Activated naive CD4-positive, alpha-beta T cell treated with anti-CD3 and anti-CD28 coated beads for 36 hours (primary cell): ENCODE measurements at regions of chr1 and their contacts with region 1.

Region 1: DNA sequence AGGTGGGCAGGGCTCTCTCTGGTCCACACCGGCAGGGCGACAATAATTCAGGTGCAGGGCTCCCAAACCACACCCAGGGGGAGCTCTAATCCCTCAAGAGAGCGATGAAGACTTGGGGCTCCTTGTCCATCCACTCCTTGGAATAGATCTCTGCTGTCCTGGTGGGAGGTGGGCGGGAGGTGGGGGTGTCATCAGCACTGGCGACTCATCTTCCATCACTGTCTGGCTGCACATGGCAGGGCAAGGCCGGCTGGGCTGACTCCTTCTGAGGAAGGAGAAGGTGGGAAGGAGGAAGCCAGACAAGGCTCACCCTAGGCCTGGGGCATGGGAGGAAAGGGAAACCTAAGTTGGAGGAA is 29.3 kb downstream of the TNNT2 start:
- DNase-seq: peak; percentile 52
- H3K4me3 Mint-ChIP-seq: no peak overlapping the region
- H3K27ac Mint-ChIP-seq: no peak overlapping the region
- H3K4me1 Mint-ChIP-seq: no peaks in the 10 kb centered on the region
- H3K27me3 Mint-ChIP-seq: peaks cover 25% of the 10 kb centered on the region

Region 2: DNA sequence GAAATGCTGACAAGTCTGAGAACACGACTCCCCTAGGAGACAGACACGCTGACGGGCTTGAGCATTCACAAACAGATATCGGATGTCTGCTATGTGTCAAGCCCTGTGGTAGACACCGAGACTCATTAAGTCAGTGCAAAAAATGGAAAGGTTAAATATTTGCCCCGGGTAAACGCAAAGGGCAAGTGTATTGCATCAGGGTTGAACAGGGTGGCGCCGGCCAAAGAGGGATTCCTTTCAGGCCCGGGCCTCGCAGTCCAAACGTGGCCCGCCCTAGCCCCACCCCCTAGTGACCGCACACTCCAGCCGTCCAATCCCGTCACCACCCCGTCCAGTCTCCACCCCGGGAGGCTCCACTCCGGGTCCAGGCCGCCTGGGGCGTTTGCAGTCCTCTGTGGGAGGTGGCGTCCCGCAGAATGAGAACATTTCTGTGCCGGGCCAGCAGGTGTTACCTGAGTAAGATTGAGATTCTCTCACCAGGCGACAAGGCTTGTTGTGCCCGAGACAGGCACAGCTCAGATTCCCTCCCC is 177.6 kb before region 1 on chr1:
- CTCF ChIA-PET with region 1: no interaction called
- intact Hi-C with region 1: no loop called
- DNase-seq: peak; percentile 93
- H3K4me3 Mint-ChIP-seq: peak overlapping the region; percentile 76
- H3K27ac Mint-ChIP-seq: peak overlapping the region; percentile 85
- H3K4me1 Mint-ChIP-seq: peaks cover 21% of the 10 kb centered on the region
- H3K27me3 Mint-ChIP-seq: peaks cover 2% of the 10 kb centered on the region

Region 3: GRCh38 chr1:201254625-201255506 is 93.3 kb before region 1 on chr1:
- CTCF ChIA-PET with region 1: interaction called, 4 read pairs
- intact Hi-C with region 1: loop called (anchors 5 kb)
- DNase-seq: peak; percentile 75
- H3K4me3 Mint-ChIP-seq: no peak overlapping the region
- H3K27ac Mint-ChIP-seq: no peak overlapping the region
- H3K4me1 Mint-ChIP-seq: no peaks in the 10 kb centered on the region
- H3K27me3 Mint-ChIP-seq: no peaks in the 10 kb centered on the region

Region 4: DNA sequence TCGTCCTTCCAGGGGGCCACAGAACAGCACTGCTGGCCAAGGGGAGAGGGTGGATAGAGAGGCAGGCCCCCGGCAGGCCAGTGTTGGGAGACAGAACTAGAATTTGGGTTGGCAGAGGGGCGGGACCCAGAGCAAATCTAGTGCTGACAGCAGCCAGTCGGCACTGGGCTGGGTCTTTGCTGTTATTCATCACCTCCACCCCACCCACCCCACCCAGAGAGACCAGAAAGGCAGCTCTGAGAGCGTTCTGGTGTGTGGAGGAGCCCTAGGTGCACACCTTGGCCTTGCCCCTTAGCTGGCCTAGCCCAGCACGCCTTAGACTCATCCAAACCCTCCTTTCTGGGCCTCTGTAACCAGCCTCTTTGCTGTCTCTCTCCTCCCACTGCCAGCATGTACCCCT is 71.3 kb before region 1 on chr1:
- CTCF ChIA-PET with region 1: no interaction called
- intact Hi-C with region 1: no loop called
- DNase-seq: no peak
- H3K4me3 Mint-ChIP-seq: no peak overlapping the region
- H3K27ac Mint-ChIP-seq: no peak overlapping the region
- H3K4me1 Mint-ChIP-seq: no peaks in the 10 kb centered on the region
- H3K27me3 Mint-ChIP-seq: peaks cover 10% of the 10 kb centered on the region

Region 5: GRCh38 chr1:201288766-201289165 is 59.4 kb before region 1 on chr1:
- CTCF ChIA-PET with region 1: no interaction called
- intact Hi-C with region 1: no loop called
- DNase-seq: no peak
- H3K4me3 Mint-ChIP-seq: no peak overlapping the region
- H3K27ac Mint-ChIP-seq: no peak overlapping the region
- H3K4me1 Mint-ChIP-seq: no peaks in the 10 kb centered on the region
- H3K27me3 Mint-ChIP-seq: peaks cover 13% of the 10 kb centered on the region

Region 6: GRCh38 chr1:201724766-201725118 is 376.6 kb after region 1 on chr1:
- CTCF ChIA-PET with region 1: no interaction called
- intact Hi-C with region 1: no loop called
- DNase-seq: no peak
- H3K4me3 Mint-ChIP-seq: no peak overlapping the region
- H3K27ac Mint-ChIP-seq: no peak overlapping the region
- H3K4me1 Mint-ChIP-seq: no peaks in the 10 kb centered on the region
- H3K27me3 Mint-ChIP-seq: no peaks in the 10 kb centered on the region